A673 (cell line): ENCODE measurements at regions of chr11 and their contacts with region 1.

Region 1: GRCh38 chr11:31303644-31304180 is 65.8 kb downstream of the DCDC1 start:
- DNase-seq: peak; percentile 67
- H3K4me3 ChIP-seq: no peak overlapping the region
- H3K27ac ChIP-seq: no peak overlapping the region
- H3K4me1 ChIP-seq: peaks cover 35% of the 10 kb centered on the region
- H3K27me3 ChIP-seq: peaks cover 40% of the 10 kb centered on the region
- CTCF ChIP-seq: no peak

Region 2: GRCh38 chr11:31325160-31325559 is 21.4 kb after region 1 on chr11:
- CTCF ChIA-PET with region 1: no interaction called
- POLR2A ChIA-PET with region 1: no interaction called
- intact Hi-C with region 1: loop called (anchors 1 kb)
- DNase-seq: peak; percentile 46
- H3K4me3 ChIP-seq: no peak overlapping the region
- H3K27ac ChIP-seq: no peak overlapping the region
- H3K4me1 ChIP-seq: no peaks in the 10 kb centered on the region
- H3K27me3 ChIP-seq: no peaks in the 10 kb centered on the region
- CTCF ChIP-seq: no peak

Region 3: DNA sequence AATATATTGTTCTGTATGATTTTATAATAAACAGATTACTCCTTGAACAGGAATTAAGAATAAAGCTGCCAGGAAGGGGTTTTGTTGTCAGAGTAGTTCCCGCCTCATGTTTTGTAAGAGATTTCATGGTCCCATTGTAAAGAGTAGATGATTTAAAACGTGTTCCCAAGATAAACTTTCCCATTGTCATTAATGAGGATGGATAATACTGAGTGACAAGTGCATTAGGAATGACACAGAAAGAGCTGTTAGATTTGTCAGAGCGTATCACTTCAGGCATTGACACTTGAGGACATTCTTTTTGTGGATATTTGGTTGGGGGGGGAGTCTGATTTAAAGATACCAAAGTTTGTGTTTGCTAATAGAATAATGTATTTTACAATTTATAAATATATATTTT is 360.4 kb after region 1 on chr11:
- CTCF ChIA-PET with region 1: interaction called, 12 read pairs
- POLR2A ChIA-PET with region 1: no interaction called
- intact Hi-C with region 1: no loop called
- DNase-seq: peak; percentile 63
- H3K4me3 ChIP-seq: no peak overlapping the region
- H3K27ac ChIP-seq: no peak overlapping the region
- H3K4me1 ChIP-seq: peaks cover 10% of the 10 kb centered on the region
- H3K27me3 ChIP-seq: no peaks in the 10 kb centered on the region
- CTCF ChIP-seq: no peak